Natural killer cell (primary cell): ENCODE measurements at regions of chr12 and their contacts with region 1.

Region 1: GRCh38 chr12:89529738-89530137 is 3.9 kb upstream of the POC1B start:
- DNase-seq: peak in 1 of 2 donors; percentile 73
- ATAC-seq: peak; percentile 39 to 53 (median 45)
- H3K4me3 ChIP-seq: no peak overlapping the region
- H3K4me3 Mint-ChIP-seq: peak overlapping the region; percentile 35
- H3K27ac ChIP-seq: no peak overlapping the region
- H3K27ac Mint-ChIP-seq: peak overlapping the region in 1 of 2 donors; percentile 79
- H3K4me1 ChIP-seq: no peaks in the 10 kb centered on the region
- H3K4me1 Mint-ChIP-seq: peaks cover 12 to 14% of the 10 kb centered on the region in 2 donors
- H3K27me3 ChIP-seq: no peaks in the 10 kb centered on the region
- H3K27me3 Mint-ChIP-seq: no peaks in the 10 kb centered on the region
- CTCF ChIP-seq: peak; percentile 84

Region 2: GRCh38 chr12:89019408-89020120 is 510.2 kb before region 1 on chr12:
- intact Hi-C with region 1: loop called (anchors 1 kb)
- DNase-seq: peak; percentile 55 to 86
- ATAC-seq: peak; percentile 91 to 99 (median 97)
- H3K4me3 ChIP-seq: no peak overlapping the region
- H3K4me3 Mint-ChIP-seq: no peak overlapping the region
- H3K27ac ChIP-seq: no peak overlapping the region
- H3K27ac Mint-ChIP-seq: no peak overlapping the region
- H3K4me1 ChIP-seq: peaks cover 4% of the 10 kb centered on the region
- H3K4me1 Mint-ChIP-seq: peaks cover 5 to 7% of the 10 kb centered on the region in 2 donors
- H3K27me3 ChIP-seq: no peaks in the 10 kb centered on the region
- H3K27me3 Mint-ChIP-seq: peaks cover 0 to 6% of the 10 kb centered on the region in 2 donors
- CTCF ChIP-seq: peak; percentile 72

Region 3: GRCh38 chr12:89051065-89051677 is 478.6 kb before region 1 on chr12:
- intact Hi-C with region 1: loop called (anchors 1 kb)
- DNase-seq: peak in 1 of 2 donors; percentile 76
- ATAC-seq: peak; percentile 61 to 78 (median 76)
- H3K4me3 ChIP-seq: no peak overlapping the region
- H3K4me3 Mint-ChIP-seq: no peak overlapping the region
- H3K27ac ChIP-seq: no peak overlapping the region
- H3K27ac Mint-ChIP-seq: no peak overlapping the region
- H3K4me1 ChIP-seq: no peaks in the 10 kb centered on the region
- H3K4me1 Mint-ChIP-seq: no peaks in the 10 kb centered on the region
- H3K27me3 ChIP-seq: no peaks in the 10 kb centered on the region
- H3K27me3 Mint-ChIP-seq: no peaks in the 10 kb centered on the region
- CTCF ChIP-seq: peak; percentile 97

Region 4: GRCh38 chr12:89556976-89557375 is 27.2 kb after region 1 on chr12:
- intact Hi-C with region 1: no loop called
- DNase-seq: no peak
- ATAC-seq: no peak
- H3K4me3 ChIP-seq: no peak overlapping the region
- H3K4me3 Mint-ChIP-seq: no peak overlapping the region
- H3K27ac ChIP-seq: no peak overlapping the region
- H3K27ac Mint-ChIP-seq: no peak overlapping the region
- H3K4me1 ChIP-seq: no peaks in the 10 kb centered on the region
- H3K4me1 Mint-ChIP-seq: no peaks in the 10 kb centered on the region
- H3K27me3 ChIP-seq: no peaks in the 10 kb centered on the region
- H3K27me3 Mint-ChIP-seq: peaks cover 0 to 7% of the 10 kb centered on the region in 2 donors
- CTCF ChIP-seq: no peak